ENCODE measurements at regions of chr4 and their contacts with region 1.

Region 1: GRCh38 chr4:107183155-107183774 is 147.2 kb upstream of the DKK2 start:
- DNase-seq: peak; percentile 13
- ATAC-seq: no peak
- H3K4me3 ChIP-seq: no peak overlapping the region
- H3K4me3 Mint-ChIP-seq: no peak overlapping the region
- H3K27ac ChIP-seq: no peak overlapping the region
- H3K27ac Mint-ChIP-seq: no peak overlapping the region
- H3K4me1 ChIP-seq: no peaks in the 10 kb centered on the region
- H3K4me1 Mint-ChIP-seq: no peaks in the 10 kb centered on the region
- H3K27me3 ChIP-seq: no peaks in the 10 kb centered on the region
- H3K27me3 Mint-ChIP-seq: no peaks in the 10 kb centered on the region
- CTCF ChIP-seq: peak; percentile 66

Region 2: DNA sequence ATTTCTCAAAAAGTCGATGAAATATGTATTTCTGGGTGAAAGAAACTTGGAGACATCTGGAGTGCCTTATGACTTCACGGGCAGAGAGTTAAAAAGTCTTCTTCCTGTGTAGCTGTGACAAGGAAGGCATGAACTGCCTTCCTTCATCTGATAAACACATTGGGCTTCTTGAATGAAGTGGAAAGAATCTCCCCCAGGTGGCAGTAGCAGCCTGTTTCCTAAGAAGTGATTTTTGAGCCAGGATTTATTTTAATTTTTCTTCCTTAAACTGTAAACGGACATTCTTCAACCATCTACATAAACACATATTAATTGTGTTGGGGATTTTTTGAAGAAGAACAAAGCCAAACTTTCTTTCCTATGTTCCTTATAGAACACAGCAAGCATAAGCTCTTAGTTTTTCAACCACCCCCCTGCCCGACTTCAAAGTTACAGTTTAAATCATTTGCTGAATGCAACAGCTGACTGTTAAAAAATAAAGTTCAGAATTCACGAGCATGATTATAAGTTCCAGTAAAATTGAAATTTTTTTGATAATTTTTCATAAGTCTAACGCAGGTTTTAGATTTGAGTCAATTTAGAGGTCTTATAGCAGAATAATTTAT is 813.7 kb before region 1 on chr4:
- CTCF ChIA-PET with region 1: no interaction called
- POLR2A ChIA-PET with region 1: no interaction called
- intact Hi-C with region 1: loop called (anchors 5 kb)
- DNase-seq: peak; percentile 25
- ATAC-seq: no peak
- H3K4me3 ChIP-seq: no peak overlapping the region
- H3K4me3 Mint-ChIP-seq: no peak overlapping the region
- H3K27ac ChIP-seq: no peak overlapping the region
- H3K27ac Mint-ChIP-seq: no peak overlapping the region
- H3K4me1 ChIP-seq: no peaks in the 10 kb centered on the region
- H3K4me1 Mint-ChIP-seq: no peaks in the 10 kb centered on the region
- H3K27me3 ChIP-seq: peaks cover 0 to 9% (median 0%) of the 10 kb centered on the region in 4 experiments
- H3K27me3 Mint-ChIP-seq: peaks cover 26% of the 10 kb centered on the region
- CTCF ChIP-seq: peak; percentile 37

Region 3: GRCh38 chr4:107131295-107131694 is 52.0 kb before region 1 on chr4:
- CTCF ChIA-PET with region 1: no interaction called
- POLR2A ChIA-PET with region 1: no interaction called
- intact Hi-C with region 1: no loop called
- DNase-seq: no peak
- ATAC-seq: no peak
- H3K4me3 ChIP-seq: no peak overlapping the region
- H3K4me3 Mint-ChIP-seq: no peak overlapping the region
- H3K27ac ChIP-seq: no peak overlapping the region
- H3K27ac Mint-ChIP-seq: no peak overlapping the region
- H3K4me1 ChIP-seq: no peaks in the 10 kb centered on the region
- H3K4me1 Mint-ChIP-seq: no peaks in the 10 kb centered on the region
- H3K27me3 ChIP-seq: no peaks in the 10 kb centered on the region
- H3K27me3 Mint-ChIP-seq: no peaks in the 10 kb centered on the region
- CTCF ChIP-seq: no peak

Region 4: DNA sequence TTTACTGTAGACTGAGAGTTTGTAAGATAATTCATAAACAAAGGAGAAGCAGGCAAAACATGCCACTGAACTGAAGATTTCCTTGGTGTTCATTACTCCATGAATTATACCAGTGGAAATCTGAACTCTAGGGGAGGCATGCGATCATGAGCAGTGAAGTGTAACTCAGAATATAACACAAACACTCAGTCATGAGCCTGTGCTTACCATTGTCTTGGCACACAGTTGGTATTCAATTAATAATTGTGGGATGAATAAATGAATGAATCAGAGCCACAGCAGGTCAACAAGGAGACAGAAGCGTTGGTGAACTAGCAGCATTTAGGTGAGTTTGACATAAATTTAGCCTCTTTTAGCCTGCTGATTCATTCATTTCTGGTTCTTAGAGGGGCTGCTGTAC is 116.4 kb after region 1 on chr4:
- CTCF ChIA-PET with region 1: no interaction called
- POLR2A ChIA-PET with region 1: no interaction called
- intact Hi-C with region 1: no loop called
- DNase-seq: no peak
- ATAC-seq: no peak
- H3K4me3 ChIP-seq: no peak overlapping the region
- H3K4me3 Mint-ChIP-seq: no peak overlapping the region
- H3K27ac ChIP-seq: no peak overlapping the region
- H3K27ac Mint-ChIP-seq: no peak overlapping the region
- H3K4me1 ChIP-seq: no peaks in the 10 kb centered on the region
- H3K4me1 Mint-ChIP-seq: no peaks in the 10 kb centered on the region
- H3K27me3 ChIP-seq: no peaks in the 10 kb centered on the region
- H3K27me3 Mint-ChIP-seq: peaks cover 3% of the 10 kb centered on the region
- CTCF ChIP-seq: no peak